ENCODE measurements at regions of chr10 and their contacts with region 1.

Region 1: DNA sequence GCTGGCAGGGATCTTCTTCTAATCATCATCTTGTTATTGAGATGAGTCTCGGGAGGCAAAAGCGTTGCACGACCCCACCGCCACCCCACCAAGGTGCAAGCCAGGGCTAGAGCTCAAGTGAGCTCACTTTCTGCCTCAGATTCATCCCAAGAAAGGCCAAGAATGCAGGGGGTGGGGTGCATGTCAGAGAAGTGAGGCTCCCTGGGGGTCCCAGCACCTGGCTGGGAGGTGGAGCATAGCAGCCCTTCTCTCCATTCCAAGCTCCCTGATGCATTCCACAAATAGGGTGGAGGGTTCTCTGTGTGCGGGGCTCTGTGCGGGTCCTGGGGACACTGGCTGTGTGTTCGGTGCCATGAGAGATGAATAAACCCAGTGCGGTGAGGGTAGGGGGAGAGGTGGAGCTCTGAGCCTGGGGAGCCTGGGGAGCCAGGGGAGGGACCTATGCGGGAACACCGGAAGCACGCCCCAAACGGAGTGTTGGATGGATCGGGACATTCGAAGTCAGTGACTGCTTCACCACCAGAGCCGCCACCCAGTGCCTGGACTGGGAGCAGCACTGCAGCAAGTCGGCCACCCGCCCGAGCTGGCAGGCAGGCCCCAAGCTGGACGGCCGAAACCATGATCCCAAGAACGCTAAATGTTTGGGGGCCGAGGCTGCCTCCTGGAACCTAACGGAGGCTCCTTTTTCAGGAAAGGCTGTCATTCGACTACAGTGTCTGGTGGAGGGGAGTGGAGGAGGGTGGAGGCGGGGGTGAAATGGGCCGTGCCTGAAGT is 17.9 kb upstream of the HMX3 start:
- DNase-seq: peak; percentile 80
- ATAC-seq: peak; percentile 97
- H3K4me3 Mint-ChIP-seq: peak overlapping the region; percentile 55
- H3K27ac Mint-ChIP-seq: no peak overlapping the region
- H3K4me1 Mint-ChIP-seq: peaks cover 19% of the 10 kb centered on the region
- H3K27me3 Mint-ChIP-seq: peaks cover 34% of the 10 kb centered on the region
- CTCF ChIP-seq: no peak

Region 2: DNA sequence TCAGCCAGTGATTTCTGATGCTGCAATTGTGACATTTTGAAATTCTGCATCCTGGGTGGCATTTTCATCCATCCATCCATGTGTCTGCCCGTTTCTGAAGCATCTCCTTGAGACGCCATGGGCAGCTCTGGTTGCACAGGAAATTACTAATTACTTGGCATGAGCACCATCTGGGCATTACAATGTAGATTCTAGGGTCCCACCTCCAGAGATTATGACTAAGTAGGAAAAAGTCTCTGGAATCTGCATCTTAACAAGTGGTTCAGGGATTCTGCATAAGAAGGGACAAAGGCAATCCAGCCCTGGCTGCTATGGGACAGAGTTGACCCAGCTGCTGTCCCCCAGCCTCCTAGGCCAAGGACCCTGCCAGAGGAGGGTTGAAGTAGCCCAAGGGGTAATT is 337.4 kb before region 1 on chr10:
- CTCF ChIA-PET with region 1: no interaction called
- POLR2A ChIA-PET with region 1: no interaction called
- DNase-seq: no peak
- ATAC-seq: peak; percentile 51; the same call in 1 of the 2 replicates
- H3K4me3 Mint-ChIP-seq: no peak overlapping the region
- H3K27ac Mint-ChIP-seq: no peak overlapping the region
- H3K4me1 Mint-ChIP-seq: peaks cover 13% of the 10 kb centered on the region
- H3K27me3 Mint-ChIP-seq: 0 out of 2 replicates have a peak, but pooled peaks cover 3% of the 10 kb centered on the region
- CTCF ChIP-seq: no peak

Region 3: DNA sequence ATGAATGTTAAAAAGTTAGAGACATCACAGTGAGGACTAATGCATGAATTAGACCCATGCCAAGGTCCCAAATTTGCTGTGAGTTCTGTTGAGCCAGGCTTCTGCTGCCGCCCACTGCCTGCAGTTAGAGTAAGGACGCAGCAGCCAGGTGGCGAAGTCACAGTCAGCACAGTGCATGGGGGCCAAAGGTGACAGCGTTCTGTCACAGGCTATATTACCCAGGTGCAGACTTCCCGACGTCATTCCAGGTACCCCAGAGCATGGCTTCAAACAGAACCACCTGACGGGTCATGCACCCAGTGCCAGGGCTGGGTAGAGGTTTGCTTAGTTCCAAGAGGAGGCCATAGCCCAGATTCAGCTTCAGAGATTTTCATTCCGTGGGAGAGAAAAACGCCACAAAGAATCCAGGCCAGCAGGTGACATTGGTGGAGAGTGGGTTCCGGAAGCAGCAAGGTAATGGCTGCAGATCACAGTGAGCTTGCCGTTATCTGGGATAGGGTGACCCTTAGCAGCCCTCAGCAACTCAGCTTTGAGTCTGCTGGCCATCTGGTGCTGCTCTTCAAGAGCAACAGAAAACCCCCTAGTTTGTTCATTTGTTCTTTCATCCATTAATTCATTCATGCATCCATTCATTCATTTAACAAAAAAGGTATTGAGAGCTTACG is 15.8 kb before region 1 on chr10:
- CTCF ChIA-PET with region 1: interaction called, 10 read pairs
- POLR2A ChIA-PET with region 1: no interaction called
- DNase-seq: no peak
- ATAC-seq: no peak
- H3K4me3 Mint-ChIP-seq: no peak overlapping the region
- H3K27ac Mint-ChIP-seq: no peak overlapping the region
- H3K4me1 Mint-ChIP-seq: peaks cover 24% of the 10 kb centered on the region
- H3K27me3 Mint-ChIP-seq: peaks cover 4% of the 10 kb centered on the region; the same call in 1 of the 2 replicates
- CTCF ChIP-seq: no peak

Region 4: GRCh38 chr10:123139521-123140163 is 21.8 kb after region 1 on chr10:
- CTCF ChIA-PET with region 1: no interaction called
- POLR2A ChIA-PET with region 1: no interaction called
- DNase-seq: peak; percentile 73
- ATAC-seq: peak; percentile 5
- H3K4me3 Mint-ChIP-seq: peak overlapping the region; percentile 61
- H3K27ac Mint-ChIP-seq: no peak overlapping the region
- H3K4me1 Mint-ChIP-seq: peaks cover 58% of the 10 kb centered on the region
- H3K27me3 Mint-ChIP-seq: peaks cover 97% of the 10 kb centered on the region
- CTCF ChIP-seq: no peak

Measured in WTC11 (cell line).